Activated CD4-positive, alpha-beta memory T cell treated with anti-CD3 and anti-CD28 coated beads for 36 hours (primary cell): ENCODE measurements at regions of chr20 and their contacts with region 1.

Region 1: GRCh38 chr20:45362804-45363610 is at the start of gene SYS1:
- DNase-seq: peak; percentile 99
- H3K4me3 Mint-ChIP-seq: peak within 1 kb of the TSS; percentile 96
- H3K27ac Mint-ChIP-seq: peak within 1 kb of the TSS; percentile 94
- H3K4me1 Mint-ChIP-seq: peaks cover 46% of the 10 kb centered on the region
- H3K27me3 Mint-ChIP-seq: no peaks in the 10 kb centered on the region
- total RNA-seq, gene SYS1: 19.9 to 24.8 TPM

Region 2: DNA sequence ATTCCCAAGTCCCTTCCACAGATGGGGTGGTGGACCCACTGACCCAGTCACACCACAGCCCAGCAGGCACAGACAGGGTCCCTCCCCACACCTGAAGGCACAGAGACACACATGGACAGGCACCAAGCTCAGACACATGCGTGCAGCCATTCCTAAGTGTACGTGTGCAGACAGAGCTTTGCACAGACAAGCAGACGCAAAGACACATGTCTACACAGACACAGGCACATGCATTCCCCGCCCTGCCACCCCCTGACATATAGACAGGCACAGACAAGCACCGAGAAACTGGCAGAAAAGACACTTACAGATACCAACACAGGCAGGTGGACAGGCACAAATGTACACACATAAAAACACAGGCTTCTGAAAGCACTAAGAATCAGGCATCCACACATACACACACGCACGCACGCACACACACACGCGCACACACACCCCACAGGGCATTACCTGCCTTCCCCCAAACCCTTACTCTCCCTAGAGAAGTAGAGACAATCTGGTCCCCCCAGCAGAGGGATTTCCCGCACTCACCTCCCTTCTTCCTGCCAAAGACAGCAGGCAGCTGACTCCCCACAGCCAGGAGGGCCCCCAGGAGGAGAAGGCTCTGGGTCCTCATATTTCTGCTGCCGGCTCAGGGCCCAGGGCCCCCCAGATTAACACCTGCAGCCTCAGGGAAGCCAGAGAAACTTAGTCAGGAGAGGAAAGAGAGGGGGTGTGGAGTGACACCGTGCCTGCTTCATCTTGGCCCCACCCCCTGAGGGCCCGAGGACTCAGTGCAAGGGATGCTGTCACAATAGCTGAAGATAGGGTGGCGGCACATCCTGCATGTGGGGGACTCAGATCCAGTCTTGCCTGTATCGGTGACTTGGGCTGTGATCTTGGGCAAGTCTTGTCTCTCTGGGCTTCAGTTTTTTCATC is 248.3 kb before region 1 on chr20 and contains the start of gene WFDC5:
- CTCF ChIA-PET with region 1: no interaction called
- POLR2A ChIA-PET with region 1: no interaction called
- intact Hi-C with region 1: no loop called
- DNase-seq: peak; percentile 51
- H3K4me3 Mint-ChIP-seq: no peak within 1 kb of the TSS
- H3K27ac Mint-ChIP-seq: no peak within 1 kb of the TSS
- H3K4me1 Mint-ChIP-seq: peaks cover 9% of the 10 kb centered on the region
- H3K27me3 Mint-ChIP-seq: peaks cover 8% of the 10 kb centered on the region
- total RNA-seq, gene WFDC5: not detected

Region 3: GRCh38 chr20:45174434-45175364 is 188.3 kb before region 1 on chr20 and contains the start of gene PI3:
- CTCF ChIA-PET with region 1: no interaction called
- POLR2A ChIA-PET with region 1: no interaction called
- intact Hi-C with region 1: no loop called
- DNase-seq: no peak
- H3K4me3 Mint-ChIP-seq: no peak within 1 kb of the TSS
- H3K27ac Mint-ChIP-seq: no peak within 1 kb of the TSS
- H3K4me1 Mint-ChIP-seq: no peaks in the 10 kb centered on the region
- H3K27me3 Mint-ChIP-seq: peaks cover 11% of the 10 kb centered on the region
- total RNA-seq, gene PI3: not detected

Region 4: DNA sequence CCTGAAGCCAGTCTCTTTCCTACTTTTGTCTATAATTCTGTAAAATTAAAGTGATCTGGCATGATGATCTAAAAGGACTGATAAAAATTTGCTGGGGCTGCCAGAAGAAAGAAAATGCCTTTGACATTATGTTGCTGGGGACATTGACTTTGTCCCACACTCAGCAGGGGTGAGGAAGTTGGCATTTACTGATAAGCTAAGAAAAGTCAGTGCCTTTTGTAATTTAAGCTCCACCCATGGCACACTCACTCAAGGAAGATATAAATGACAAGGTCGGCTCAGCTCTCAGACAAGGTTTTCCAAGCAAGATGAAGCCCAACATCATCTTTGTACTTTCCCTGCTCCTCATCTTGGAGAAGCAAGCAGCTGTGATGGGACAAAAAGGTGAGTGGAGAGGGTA is 156.3 kb before region 1 on chr20 and contains the start of gene SEMG1:
- CTCF ChIA-PET with region 1: no interaction called
- POLR2A ChIA-PET with region 1: no interaction called
- intact Hi-C with region 1: no loop called
- DNase-seq: no peak
- H3K4me3 Mint-ChIP-seq: no peak within 1 kb of the TSS
- H3K27ac Mint-ChIP-seq: no peak within 1 kb of the TSS
- H3K4me1 Mint-ChIP-seq: no peaks in the 10 kb centered on the region
- H3K27me3 Mint-ChIP-seq: peaks cover 32% of the 10 kb centered on the region
- total RNA-seq, gene SEMG1: not detected

Region 5: GRCh38 chr20:45300961-45301360 is 62.0 kb before region 1 on chr20:
- CTCF ChIA-PET with region 1: interaction called, 11 read pairs
- POLR2A ChIA-PET with region 1: interaction called, 3 read pairs
- intact Hi-C with region 1: no loop called
- DNase-seq: peak; percentile 71
- H3K4me3 Mint-ChIP-seq: no peak overlapping the region
- H3K27ac Mint-ChIP-seq: no peak overlapping the region
- H3K4me1 Mint-ChIP-seq: peaks cover 32% of the 10 kb centered on the region
- H3K27me3 Mint-ChIP-seq: peaks cover 35% of the 10 kb centered on the region

Region 6: GRCh38 chr20:45322952-45323383 is 40.0 kb before region 1 on chr20:
- CTCF ChIA-PET with region 1: interaction called, 20 read pairs
- POLR2A ChIA-PET with region 1: no interaction called
- intact Hi-C with region 1: loop called (anchors 2 kb)
- DNase-seq: no peak
- H3K4me3 Mint-ChIP-seq: no peak overlapping the region
- H3K27ac Mint-ChIP-seq: no peak overlapping the region
- H3K4me1 Mint-ChIP-seq: peaks cover 26% of the 10 kb centered on the region
- H3K27me3 Mint-ChIP-seq: no peaks in the 10 kb centered on the region

Region 7: DNA sequence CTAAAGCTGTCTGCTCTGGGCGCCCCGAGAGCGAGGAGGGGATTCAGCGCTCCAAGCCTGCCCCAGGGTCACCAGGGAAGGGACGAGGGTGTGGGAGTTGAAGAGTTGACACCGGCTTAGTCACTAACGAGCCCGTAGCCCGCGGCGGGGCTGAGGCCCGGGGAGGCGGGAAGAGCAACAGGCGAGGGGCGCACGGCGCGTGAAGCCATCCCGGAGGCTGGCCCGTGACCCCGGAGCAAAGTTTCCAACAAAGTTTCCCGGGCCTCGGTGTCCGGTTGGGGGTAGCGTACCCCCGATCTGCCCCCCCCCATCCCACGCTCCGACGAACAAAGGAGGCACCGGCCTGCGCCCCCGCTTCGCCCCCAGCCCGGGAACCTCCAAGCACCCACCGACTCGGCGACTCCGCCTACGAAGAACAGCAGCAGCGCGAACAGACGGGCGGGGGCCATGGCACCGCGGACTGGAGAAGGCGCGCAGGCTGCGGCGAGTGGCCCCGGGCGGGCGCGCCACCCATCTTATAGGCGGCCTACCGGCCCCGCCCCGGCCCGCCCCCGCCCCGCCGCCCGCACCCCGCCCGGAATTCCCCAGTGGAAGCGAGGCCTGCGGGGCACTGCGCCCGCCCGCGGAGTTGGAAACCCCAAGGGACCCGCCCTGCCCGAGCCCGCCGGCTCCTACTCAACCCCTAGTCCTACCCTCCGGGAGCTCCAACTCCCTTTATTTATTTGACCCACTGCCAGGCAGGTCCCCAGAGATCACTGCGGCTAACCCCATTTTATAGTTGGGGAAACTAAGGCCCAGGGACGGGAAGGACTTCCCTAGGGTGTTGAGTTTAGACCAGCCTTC is 14.8 kb before region 1 on chr20 and contains the start of gene SDC4:
- CTCF ChIA-PET with region 1: interaction called, 29 read pairs
- POLR2A ChIA-PET with region 1: interaction called, 16 read pairs
- intact Hi-C with region 1: loop called (anchors 2 kb)
- DNase-seq: peak; percentile 76
- H3K4me3 Mint-ChIP-seq: peak within 1 kb of the TSS; percentile 86
- H3K27ac Mint-ChIP-seq: peak within 1 kb of the TSS; percentile 76
- H3K4me1 Mint-ChIP-seq: peaks cover 43% of the 10 kb centered on the region
- H3K27me3 Mint-ChIP-seq: no peaks in the 10 kb centered on the region
- total RNA-seq, gene SDC4: 67.8 to 69.8 TPM

Region 8: GRCh38 chr20:45415774-45416637 is 53.0 kb after region 1 on chr20 and contains the start of gene PIGT:
- CTCF ChIA-PET with region 1: interaction called, 25 read pairs
- POLR2A ChIA-PET with region 1: interaction called, 11 read pairs
- intact Hi-C with region 1: loop called (anchors 1 kb)
- DNase-seq: peak; percentile 93
- H3K4me3 Mint-ChIP-seq: peak within 1 kb of the TSS; percentile 91
- H3K27ac Mint-ChIP-seq: peak within 1 kb of the TSS; percentile 97
- H3K4me1 Mint-ChIP-seq: peaks cover 47% of the 10 kb centered on the region
- H3K27me3 Mint-ChIP-seq: no peaks in the 10 kb centered on the region
- total RNA-seq, gene PIGT: 41.5 to 44.4 TPM

Region 9: DNA sequence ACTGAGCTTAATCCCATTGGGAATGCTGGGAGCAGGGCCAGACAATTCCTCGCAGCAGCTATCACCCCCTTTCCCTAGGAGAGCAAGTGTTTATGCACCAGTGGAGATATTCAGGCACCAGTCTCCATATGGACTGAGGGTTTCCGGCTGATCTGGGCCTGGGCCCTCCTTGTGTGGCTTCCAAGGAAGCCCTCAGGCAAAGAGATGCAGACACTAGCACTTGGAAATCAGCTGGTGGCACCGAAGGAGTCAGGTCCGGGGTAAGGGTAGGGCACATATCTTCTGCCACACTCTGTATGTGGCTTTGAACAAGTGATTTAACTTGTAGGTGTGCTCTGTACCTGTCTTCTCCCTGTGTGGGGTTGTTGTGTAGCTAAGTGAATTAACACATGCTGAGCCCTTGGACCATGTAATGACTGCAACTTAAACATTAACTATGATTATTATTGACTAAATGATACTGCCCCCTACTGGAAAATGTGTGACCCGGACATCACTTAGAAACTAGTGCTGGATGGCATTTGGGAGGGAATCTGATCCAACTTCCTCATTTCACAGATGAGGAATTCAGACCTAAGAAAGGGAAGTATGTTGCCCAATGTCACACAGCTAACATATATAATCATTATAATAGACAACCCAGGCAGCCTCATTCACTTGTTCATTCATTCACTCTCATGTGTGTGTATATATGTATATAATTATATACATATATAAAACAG is 87.3 kb after region 1 on chr20:
- CTCF ChIA-PET with region 1: interaction called, 69 read pairs
- POLR2A ChIA-PET with region 1: no interaction called
- intact Hi-C with region 1: no loop called
- DNase-seq: no peak
- H3K4me3 Mint-ChIP-seq: no peak overlapping the region
- H3K27ac Mint-ChIP-seq: no peak overlapping the region
- H3K4me1 Mint-ChIP-seq: no peaks in the 10 kb centered on the region
- H3K27me3 Mint-ChIP-seq: peaks cover 3% of the 10 kb centered on the region

Region 10: GRCh38 chr20:45518282-45518681 is 155.3 kb after region 1 on chr20:
- CTCF ChIA-PET with region 1: no interaction called
- POLR2A ChIA-PET with region 1: no interaction called
- intact Hi-C with region 1: no loop called
- DNase-seq: no peak
- H3K4me3 Mint-ChIP-seq: no peak overlapping the region
- H3K27ac Mint-ChIP-seq: no peak overlapping the region
- H3K4me1 Mint-ChIP-seq: no peaks in the 10 kb centered on the region
- H3K27me3 Mint-ChIP-seq: peaks cover 21% of the 10 kb centered on the region

Region 11: GRCh38 chr20:45792332-45792686 is 429.3 kb after region 1 on chr20:
- CTCF ChIA-PET with region 1: interaction called, 5 read pairs
- POLR2A ChIA-PET with region 1: no interaction called
- intact Hi-C with region 1: loop called (anchors 5 kb)
- DNase-seq: peak; percentile 20
- H3K4me3 Mint-ChIP-seq: peak overlapping the region; percentile 86
- H3K27ac Mint-ChIP-seq: peak overlapping the region; percentile 81
- H3K4me1 Mint-ChIP-seq: peaks cover 15% of the 10 kb centered on the region
- H3K27me3 Mint-ChIP-seq: no peaks in the 10 kb centered on the region